ENCODE measurements at regions of chr17 and their contacts with region 1.

Region 1: DNA sequence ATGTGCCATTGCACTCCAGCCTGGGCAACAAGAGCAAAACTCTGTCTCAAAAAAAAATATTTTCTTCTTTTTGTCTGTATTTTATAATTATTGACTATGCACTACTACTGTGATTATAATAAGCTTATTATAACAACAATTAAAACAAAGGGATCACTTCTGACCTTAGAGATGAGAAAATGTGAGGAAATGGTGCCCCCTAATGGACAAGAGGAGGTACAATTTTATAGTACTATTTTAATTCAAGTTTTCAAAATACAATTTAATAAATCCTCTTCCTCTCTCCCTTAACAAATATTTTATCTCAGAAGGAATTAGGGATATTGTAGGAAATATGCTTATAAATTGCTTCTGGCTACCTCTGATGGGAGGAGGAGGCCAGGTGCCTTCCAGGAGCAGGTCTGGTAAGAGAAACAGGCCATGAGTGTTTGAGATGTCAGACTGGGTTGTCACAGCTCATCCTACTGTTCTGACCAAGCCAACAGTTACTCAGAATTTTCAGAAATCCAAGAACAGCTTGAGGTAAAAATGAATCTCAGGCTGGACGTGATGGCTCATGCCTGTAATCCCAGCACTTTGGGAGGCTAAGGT is 14.0 kb downstream of the VPS53 start:
- DNase-seq: peak in 2 of 5 donors; percentile 43
- H3K4me3 ChIP-seq: no peak overlapping the region
- H3K4me3 Mint-ChIP-seq: no peak overlapping the region
- H3K27ac ChIP-seq: no peak overlapping the region
- H3K27ac Mint-ChIP-seq: peak overlapping the region in 3 of 8 donors; percentile 27 to 62 (median 58)
- H3K4me1 ChIP-seq: no peaks in the 10 kb centered on the region
- H3K4me1 Mint-ChIP-seq: peaks cover 8 to 10% (median 8%) of the 10 kb centered on the region in 3 donors
- H3K27me3 ChIP-seq: no peaks in the 10 kb centered on the region
- H3K27me3 Mint-ChIP-seq: no peaks in the 10 kb centered on the region

Region 2: DNA sequence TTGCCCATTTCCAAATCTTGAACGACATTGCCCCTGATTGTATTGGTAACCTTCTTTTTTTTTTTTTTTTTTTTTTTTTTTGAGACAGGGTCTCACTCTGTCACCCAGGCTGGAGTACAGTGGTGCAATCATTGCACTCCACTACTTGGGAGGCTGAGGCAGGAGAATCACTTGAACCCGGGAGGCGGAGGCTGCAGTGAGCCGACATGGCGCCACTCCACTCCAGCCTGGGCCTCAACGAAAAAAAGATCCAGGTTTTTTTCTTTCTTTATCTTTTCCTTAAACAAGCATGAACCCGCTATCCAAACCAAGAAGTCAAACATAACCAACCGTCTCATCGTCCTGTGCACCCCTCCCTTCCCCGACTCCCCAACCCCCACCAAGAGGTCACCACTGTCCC is 300.3 kb before region 1 on chr17:
- CTCF ChIA-PET with region 1: interaction called, 13 read pairs
- POLR2A ChIA-PET with region 1: no interaction called
- DNase-seq: no peak
- H3K4me3 ChIP-seq: no peak overlapping the region
- H3K4me3 Mint-ChIP-seq: no peak overlapping the region
- H3K27ac ChIP-seq: no peak overlapping the region
- H3K27ac Mint-ChIP-seq: no peak overlapping the region
- H3K4me1 ChIP-seq: no peaks in the 10 kb centered on the region
- H3K4me1 Mint-ChIP-seq: peaks cover 2 to 8% (median 3%) of the 10 kb centered on the region in 3 donors
- H3K27me3 ChIP-seq: no peaks in the 10 kb centered on the region
- H3K27me3 Mint-ChIP-seq: no peaks in the 10 kb centered on the region

Region 3: DNA sequence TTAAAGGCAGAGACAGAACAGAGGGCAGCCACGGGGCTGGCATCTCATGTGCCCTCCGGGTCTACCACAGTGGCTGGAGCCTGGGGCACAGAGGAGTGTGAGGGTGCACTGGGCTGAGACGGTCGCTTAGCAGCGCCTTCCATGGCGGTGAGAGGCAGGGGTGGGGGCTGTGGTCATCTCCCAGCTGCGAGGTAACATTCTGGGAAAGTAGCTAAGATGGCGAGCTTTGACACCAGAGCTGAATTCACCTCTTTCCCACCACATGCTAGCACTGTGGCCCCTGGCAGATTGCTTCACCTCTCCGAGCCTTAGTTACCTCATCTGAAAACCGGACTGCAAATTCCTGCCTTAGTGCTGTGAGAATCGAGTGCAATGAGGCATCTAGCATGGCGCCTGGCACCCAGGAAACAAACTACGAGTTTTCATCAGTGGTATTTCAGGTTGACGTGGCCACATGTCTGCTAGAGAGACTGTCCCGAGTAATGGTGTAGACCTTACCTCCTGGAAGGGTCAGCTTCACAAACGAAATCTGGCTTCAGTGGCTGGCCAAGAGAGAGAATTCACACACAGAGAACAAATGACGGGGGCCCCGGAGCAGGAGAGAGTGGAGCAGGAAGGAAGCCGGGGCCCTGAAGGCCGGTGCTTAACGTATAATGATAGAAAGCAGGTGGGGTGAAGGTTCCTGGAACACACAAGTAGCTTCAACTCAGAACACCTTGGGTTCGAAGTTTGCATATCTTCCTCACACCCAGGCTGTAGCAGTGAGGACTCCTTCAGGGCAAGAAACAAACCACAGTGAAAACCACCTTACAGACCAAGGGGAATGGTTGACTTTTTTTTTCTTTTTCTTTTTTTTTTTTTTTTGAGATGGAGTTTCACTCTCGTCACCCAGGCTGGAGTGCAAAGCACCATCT is 284.0 kb before region 1 on chr17:
- CTCF ChIA-PET with region 1: interaction called, 102 read pairs
- POLR2A ChIA-PET with region 1: interaction called, 5 read pairs
- DNase-seq: peak in 3 of 5 donors; percentile 49 to 62 (median 54)
- H3K4me3 ChIP-seq: peak overlapping the region; percentile 73
- H3K4me3 Mint-ChIP-seq: peak overlapping the region; percentile 76 to 98 (median 88)
- H3K27ac ChIP-seq: peak overlapping the region; percentile 76
- H3K27ac Mint-ChIP-seq: peak overlapping the region; percentile 90 to 99 (median 98)
- H3K4me1 ChIP-seq: peaks cover 92% of the 10 kb centered on the region
- H3K4me1 Mint-ChIP-seq: peaks cover 71 to 89% (median 87%) of the 10 kb centered on the region in 3 donors
- H3K27me3 ChIP-seq: no peaks in the 10 kb centered on the region
- H3K27me3 Mint-ChIP-seq: peaks cover 0 to 1% of the 10 kb centered on the region in 2 donors